ENCODE measurements at regions of chr15 and their contacts with region 1.

Region 1: DNA sequence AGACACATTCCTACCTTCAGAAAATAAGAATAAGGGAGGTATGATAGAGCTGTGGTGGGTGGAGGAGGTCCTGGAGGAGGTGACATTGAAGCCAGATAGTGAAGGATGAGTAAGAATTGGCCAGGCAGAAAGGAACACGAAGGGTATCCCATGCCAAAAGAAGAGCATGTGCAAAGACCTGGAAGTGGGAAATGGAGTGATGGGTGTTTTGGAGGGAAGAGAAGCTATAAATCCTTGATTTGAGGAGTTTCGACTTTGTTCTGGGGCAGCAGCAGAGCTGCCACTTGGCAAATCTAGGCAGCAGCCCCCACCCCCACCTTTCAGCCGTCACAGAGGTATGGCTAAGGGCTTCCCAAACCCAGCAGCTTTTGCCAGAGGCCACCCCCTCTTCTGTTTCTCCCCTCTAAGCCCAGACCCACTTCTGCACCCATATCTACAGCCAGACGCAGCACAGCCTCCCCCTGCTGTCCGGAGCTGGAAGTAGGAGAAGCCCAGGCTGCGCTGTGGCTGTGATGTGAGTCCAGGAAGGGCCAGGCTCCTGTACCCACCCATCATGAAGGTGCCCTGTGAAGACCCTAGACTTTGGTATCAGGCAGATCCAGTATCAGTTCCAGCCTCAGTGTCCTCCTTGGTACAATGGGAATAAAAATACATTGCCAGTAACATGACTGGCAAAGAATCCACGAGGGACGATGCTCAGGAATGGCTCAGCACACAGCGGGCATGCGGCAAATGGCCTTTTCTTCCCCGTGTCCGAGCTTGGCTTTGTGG is 188.7 kb upstream of the LINGO1 start:
- DNase-seq: peak; percentile 46
- H3K4me3 ChIP-seq: no peak overlapping the region
- H3K27ac ChIP-seq: no peak overlapping the region
- H3K4me1 ChIP-seq: peaks cover 0 to 18% (median 13%) of the 10 kb centered on the region in 4 donors
- H3K27me3 ChIP-seq: peaks cover 65% of the 10 kb centered on the region
- CTCF ChIP-seq: peak; percentile 53 to 75 (median 63)
- EP300 ChIP-seq: no peak
- POLR2A ChIP-seq: no peak

Region 2: DNA sequence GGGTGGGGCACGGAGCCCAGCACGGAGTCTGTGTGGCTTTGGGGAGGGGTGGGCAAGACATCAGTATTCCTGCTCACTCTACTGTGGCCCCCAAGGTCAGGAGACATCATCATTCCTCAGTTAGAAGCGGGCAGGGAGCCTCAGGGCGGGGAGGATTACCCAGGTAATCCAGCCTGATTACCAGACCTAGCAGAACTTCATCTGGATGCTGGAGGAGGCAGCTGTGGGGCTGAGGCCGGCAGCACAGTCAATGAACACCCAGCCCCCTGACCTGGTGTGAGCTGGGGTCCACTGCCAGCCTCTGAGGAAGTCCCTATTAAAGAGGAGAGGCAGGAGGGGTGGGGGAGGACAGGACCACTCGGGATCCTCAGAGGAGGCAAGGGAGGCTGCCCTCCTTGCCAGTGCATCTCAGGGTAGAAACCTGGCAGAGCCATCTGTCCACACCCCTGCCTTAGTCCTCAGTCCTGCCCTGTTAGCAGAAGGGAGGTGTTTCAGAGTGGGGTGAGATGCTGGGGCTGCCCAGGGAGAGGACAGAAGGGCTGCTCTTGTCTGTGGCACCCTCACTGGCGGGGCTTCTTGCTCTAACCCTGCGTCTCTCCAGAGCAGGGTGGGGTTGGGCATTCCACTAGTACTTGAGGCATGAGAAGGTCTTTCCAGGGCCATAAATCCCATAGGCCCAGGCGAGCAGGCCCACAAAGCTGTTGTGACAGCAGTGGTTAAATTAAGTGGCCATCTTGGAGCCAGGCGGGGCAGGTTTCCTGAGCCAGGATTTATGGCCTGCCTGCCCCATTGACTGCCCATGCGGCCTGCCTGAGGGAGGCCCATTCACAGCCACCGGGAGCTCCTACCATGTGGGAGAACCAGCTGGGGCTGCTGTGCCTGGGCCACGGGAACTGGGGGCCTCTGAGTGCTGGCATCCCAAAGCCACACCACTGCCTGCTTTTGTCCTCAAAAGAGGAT is 270.8 kb before region 1 on chr15:
- in situ Hi-C with region 1: no loop called
- intact Hi-C with region 1: no loop called
- DNase-seq: no peak
- H3K4me3 ChIP-seq: no peak overlapping the region
- H3K27ac ChIP-seq: no peak overlapping the region
- H3K4me1 ChIP-seq: peaks cover 0 to 6% (median 3%) of the 10 kb centered on the region in 4 donors
- H3K27me3 ChIP-seq: no peaks in the 10 kb centered on the region
- CTCF ChIP-seq: no peak
- EP300 ChIP-seq: no peak
- POLR2A ChIP-seq: no peak

Region 3: GRCh38 chr15:77633134-77633912 is 188.1 kb before region 1 on chr15:
- in situ Hi-C with region 1: loop called in 2 of 4 experiments (anchors 25 kb)
- intact Hi-C with region 1: no loop called
- DNase-seq: peak; percentile 90
- H3K4me3 ChIP-seq: peak overlapping the region; percentile 8 to 53 (median 28)
- H3K27ac ChIP-seq: no peak overlapping the region
- H3K4me1 ChIP-seq: peaks cover 13 to 27% (median 20%) of the 10 kb centered on the region in 4 donors
- H3K27me3 ChIP-seq: peaks cover 67% of the 10 kb centered on the region
- CTCF ChIP-seq: peak; percentile 99 to 100 (median 100)
- EP300 ChIP-seq: no peak
- POLR2A ChIP-seq: no peak

Region 4: DNA sequence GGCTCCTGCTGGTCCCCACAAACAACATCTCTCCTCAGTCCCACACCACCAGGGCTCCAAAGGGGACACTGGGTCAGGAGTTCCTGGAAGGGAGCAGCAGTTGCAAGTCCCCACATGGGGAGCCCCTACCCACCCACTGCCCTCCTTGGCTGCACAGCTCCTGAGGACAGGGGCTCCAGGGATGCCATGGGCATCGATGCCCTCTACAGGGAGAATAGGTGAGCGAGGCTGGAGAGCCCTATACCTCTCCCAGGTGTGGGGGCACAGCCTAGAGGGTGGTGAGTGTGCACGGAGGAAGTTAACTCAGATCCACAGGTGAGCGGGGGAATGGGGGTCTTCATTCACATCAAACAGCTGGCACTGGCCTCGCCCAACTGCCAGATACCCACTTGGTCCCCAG is 47.5 kb before region 1 on chr15:
- in situ Hi-C with region 1: no loop called
- intact Hi-C with region 1: no loop called
- DNase-seq: no peak
- H3K4me3 ChIP-seq: no peak overlapping the region
- H3K27ac ChIP-seq: no peak overlapping the region
- H3K4me1 ChIP-seq: no peaks in the 10 kb centered on the region
- H3K27me3 ChIP-seq: peaks cover 5% of the 10 kb centered on the region
- CTCF ChIP-seq: no peak
- EP300 ChIP-seq: no peak
- POLR2A ChIP-seq: no peak

Measured in transverse colon (tissue), 4 donors.